Activated CD4-positive, alpha-beta T cell treated with anti-CD3 and anti-CD28 coated beads, Interleukin-2, amount 10 ng/mL, durations not matched to agents 24 days and 14 days (primary cell): ENCODE measurements at regions of chr16 and their contacts with region 1.

Region 1: DNA sequence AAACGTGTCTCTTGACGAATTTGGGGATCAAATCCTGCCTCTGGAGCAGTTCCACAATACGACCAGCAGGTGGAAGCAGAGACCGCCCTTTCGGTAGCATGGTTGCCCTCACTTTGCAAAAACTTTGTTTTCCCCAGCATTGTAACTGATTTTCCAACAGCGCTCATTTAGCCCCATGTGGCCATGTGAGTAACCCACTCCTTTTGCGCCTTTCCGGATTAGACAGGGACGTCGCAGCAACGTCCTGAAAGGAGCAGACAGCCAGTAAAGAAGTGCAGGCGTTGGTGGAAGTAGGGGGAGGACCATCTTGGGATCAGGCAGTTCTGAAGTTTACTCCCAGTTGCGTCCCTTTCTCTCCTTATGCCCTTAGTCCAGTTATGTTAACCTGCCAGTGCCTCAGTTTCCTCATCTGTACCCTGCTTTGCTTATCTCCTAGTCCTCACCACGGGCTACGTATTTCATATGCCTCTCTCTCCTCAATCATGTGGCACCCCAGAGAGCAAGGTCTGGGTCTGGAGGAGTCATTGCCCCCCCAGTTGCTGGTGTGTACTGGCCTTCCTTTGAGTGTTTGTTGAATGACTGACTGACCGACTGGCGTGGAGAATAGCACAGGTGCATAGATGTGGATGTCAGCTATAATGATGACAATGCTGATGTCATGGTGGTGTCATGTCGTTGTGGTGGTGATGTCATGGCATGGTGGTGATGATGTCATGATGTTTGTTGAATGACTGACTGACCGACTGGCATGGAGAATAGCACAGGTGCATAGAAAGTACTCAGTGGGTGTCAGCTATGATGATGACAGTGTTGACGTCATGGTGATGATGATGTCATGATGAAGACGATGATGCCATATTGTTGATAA is 22.3 kb downstream of the TMEM114 start:
- DNase-seq: peak; percentile 93
- H3K4me3 Mint-ChIP-seq: no peak overlapping the region
- H3K27ac Mint-ChIP-seq: peak overlapping the region; percentile 34
- H3K4me1 Mint-ChIP-seq: peaks cover 5% of the 10 kb centered on the region
- H3K27me3 Mint-ChIP-seq: no peaks in the 10 kb centered on the region

Region 2: DNA sequence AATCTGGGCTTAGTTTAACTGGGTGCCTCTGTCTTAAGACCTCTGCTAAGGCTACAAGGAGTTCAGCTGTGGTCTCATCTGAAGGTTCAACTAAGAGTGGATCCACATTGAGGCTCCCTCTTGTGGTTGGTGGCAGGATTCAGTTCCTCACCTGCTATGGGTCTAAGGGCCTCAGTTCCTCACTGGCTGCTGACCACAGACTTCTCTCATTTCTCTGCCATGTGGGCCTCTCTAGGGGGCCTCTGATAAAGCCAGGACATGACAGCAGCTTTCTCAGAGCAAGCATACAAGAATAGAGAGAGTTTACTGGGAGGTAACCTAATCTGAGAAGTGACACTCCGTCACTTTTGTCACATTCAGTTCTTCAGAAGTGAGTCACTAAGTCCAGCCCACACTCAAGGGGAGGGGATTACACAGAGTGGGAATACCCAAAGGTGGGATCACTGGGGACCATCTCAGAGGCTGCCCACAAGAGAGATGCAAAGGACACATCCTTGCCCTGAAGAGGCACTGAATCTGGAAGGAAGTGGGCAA is 87.3 kb after region 1 on chr16:
- intact Hi-C with region 1: loop called (anchors 1 kb)
- DNase-seq: peak; percentile 81
- H3K4me3 Mint-ChIP-seq: no peak overlapping the region
- H3K27ac Mint-ChIP-seq: no peak overlapping the region
- H3K4me1 Mint-ChIP-seq: peaks cover 6% of the 10 kb centered on the region
- H3K27me3 Mint-ChIP-seq: no peaks in the 10 kb centered on the region

Region 3: DNA sequence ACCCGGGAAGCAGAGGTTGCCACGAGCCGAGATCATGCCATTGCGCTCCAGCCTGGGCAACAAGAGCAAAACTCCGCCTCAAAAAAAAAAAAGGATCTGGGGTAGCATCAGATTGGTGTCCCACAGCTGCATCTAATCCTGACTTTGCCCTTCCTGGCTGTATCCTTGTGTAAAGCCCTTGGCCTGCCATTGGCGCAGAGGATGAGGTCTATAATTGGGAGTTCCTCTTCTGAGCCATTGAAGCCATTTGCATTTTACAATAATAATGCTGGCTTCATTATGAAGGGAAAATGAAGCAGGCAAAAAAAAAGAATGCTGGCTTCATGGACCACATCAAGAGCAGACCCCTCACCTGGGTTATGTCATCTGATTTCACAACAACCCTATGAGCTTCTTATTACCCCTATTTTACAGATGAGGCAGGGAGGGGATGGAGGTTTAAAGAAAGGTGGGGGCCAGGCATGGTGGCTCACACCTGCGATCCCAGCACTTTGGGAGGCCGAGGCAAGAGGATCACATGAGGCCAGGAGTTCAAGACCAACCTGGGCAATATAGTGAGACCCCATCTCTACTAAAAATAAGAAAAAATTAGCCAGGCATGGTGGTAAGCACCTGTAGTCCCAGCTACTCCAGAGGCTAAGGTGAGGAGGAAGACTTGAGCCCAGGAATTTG is 313.0 kb after region 1 on chr16:
- intact Hi-C with region 1: loop called (anchors 1 kb)
- DNase-seq: no peak
- H3K4me3 Mint-ChIP-seq: no peak overlapping the region
- H3K27ac Mint-ChIP-seq: no peak overlapping the region
- H3K4me1 Mint-ChIP-seq: peaks cover 4% of the 10 kb centered on the region
- H3K27me3 Mint-ChIP-seq: peaks cover 2% of the 10 kb centered on the region

Region 4: GRCh38 chr16:9134739-9135138 is 566.8 kb after region 1 on chr16:
- intact Hi-C with region 1: loop called (anchors 5 kb)
- DNase-seq: peak; percentile 89
- H3K4me3 Mint-ChIP-seq: no peak overlapping the region
- H3K27ac Mint-ChIP-seq: no peak overlapping the region
- H3K4me1 Mint-ChIP-seq: peaks cover 14% of the 10 kb centered on the region
- H3K27me3 Mint-ChIP-seq: peaks cover 6% of the 10 kb centered on the region